ENCODE measurements at regions of chr9 and their contacts with region 1.

Region 1: GRCh38 chr9:105425841-105426436 is 21.9 kb upstream of the FSD1L start:
- DNase-seq: no peak
- ATAC-seq: peak; percentile 79; the same call in 1 of the 2 replicates
- H3K4me3 ChIP-seq: no peak overlapping the region
- H3K27ac ChIP-seq: no peak overlapping the region
- H3K4me1 ChIP-seq: no peaks in the 10 kb centered on the region
- H3K27me3 ChIP-seq: no peaks in the 10 kb centered on the region
- CTCF ChIP-seq: peak; percentile 60; the same call in 1 of the 2 replicates

Region 2: GRCh38 chr9:105376893-105377292 is 49.0 kb before region 1 on chr9:
- CTCF ChIA-PET with region 1: no interaction called
- POLR2A ChIA-PET with region 1: no interaction called
- in situ Hi-C with region 1: no loop called
- intact Hi-C with region 1: no loop called
- DNase-seq: no peak
- ATAC-seq: no peak
- H3K4me3 ChIP-seq: no peak overlapping the region
- H3K27ac ChIP-seq: no peak overlapping the region
- H3K4me1 ChIP-seq: no peaks in the 10 kb centered on the region
- H3K27me3 ChIP-seq: no peaks in the 10 kb centered on the region
- CTCF ChIP-seq: no peak

Region 3: GRCh38 chr9:105457560-105458294 is 31.8 kb after region 1 on chr9:
- CTCF ChIA-PET with region 1: no interaction called
- POLR2A ChIA-PET with region 1: no interaction called
- in situ Hi-C with region 1: no loop called
- intact Hi-C with region 1: no loop called
- DNase-seq: no peak
- ATAC-seq: no peak
- H3K4me3 ChIP-seq: no peak overlapping the region
- H3K27ac ChIP-seq: no peak overlapping the region
- H3K4me1 ChIP-seq: no peaks in the 10 kb centered on the region
- H3K27me3 ChIP-seq: no peaks in the 10 kb centered on the region
- CTCF ChIP-seq: no peak

Region 4: GRCh38 chr9:105535920-105536668 is 110.2 kb after region 1 on chr9:
- CTCF ChIA-PET with region 1: no interaction called
- POLR2A ChIA-PET with region 1: no interaction called
- in situ Hi-C with region 1: no loop called
- intact Hi-C with region 1: loop called (anchors 10 kb)
- DNase-seq: no peak
- ATAC-seq: no peak
- H3K4me3 ChIP-seq: no peak overlapping the region
- H3K27ac ChIP-seq: no peak overlapping the region
- H3K4me1 ChIP-seq: no peaks in the 10 kb centered on the region
- H3K27me3 ChIP-seq: no peaks in the 10 kb centered on the region
- CTCF ChIP-seq: no peak

Measured in Panc1 (cell line).